Heart right ventricle (tissue), 16 donors: ENCODE measurements at regions of chr15 and their contacts with region 1.

Region 1: DNA sequence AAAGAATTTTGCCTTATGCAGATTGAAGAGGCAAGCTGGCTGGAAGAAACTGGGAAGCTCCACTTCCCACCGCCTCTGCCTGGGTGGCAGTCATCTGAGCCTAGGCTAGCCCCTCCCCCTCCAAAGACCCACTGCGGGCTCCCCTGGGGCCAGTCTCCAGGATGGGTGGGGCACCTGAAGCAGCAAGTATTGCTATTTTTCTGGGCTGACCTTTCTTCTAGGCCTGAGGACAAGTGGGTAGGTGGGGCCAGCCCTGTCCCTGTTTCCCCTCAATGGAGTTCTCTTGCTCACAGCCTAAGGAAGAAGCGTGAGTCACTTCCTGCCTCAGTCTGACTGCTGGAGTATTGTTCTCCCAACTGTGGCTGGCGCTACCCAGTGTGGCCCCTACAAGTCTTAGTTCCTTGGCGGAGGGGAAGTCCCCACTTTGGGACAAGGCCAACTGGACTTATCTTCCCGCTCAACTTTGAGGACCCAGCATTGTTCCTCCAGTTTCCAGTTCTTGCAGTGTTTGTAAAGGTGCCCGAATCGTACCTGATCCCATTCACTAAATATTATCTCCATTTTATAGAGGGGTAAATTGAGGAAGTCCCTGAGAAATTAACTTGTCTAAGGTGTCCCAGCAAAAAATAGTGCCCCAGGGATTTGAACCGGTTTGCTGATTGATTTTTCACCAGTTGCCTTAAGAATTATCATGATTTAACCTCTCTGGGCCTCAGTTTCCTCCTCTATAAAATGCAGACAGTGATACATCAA is 1.4 kb downstream of the FURIN start:
- DNase-seq: peak; percentile 81 to 89
- ATAC-seq: peak; percentile 82 to 93 (median 89)
- H3K4me3 ChIP-seq: peak overlapping the region in 8 of 10 donors; percentile 65 to 92 (median 74)
- H3K27ac ChIP-seq: peak overlapping the region; percentile 90 to 100 (median 98)
- H3K4me1 ChIP-seq: peaks cover 20 to 69% (median 52%) of the 10 kb centered on the region in 9 donors
- H3K27me3 ChIP-seq: no peaks in the 10 kb centered on the region
- CTCF ChIP-seq: no peak

Region 2: DNA sequence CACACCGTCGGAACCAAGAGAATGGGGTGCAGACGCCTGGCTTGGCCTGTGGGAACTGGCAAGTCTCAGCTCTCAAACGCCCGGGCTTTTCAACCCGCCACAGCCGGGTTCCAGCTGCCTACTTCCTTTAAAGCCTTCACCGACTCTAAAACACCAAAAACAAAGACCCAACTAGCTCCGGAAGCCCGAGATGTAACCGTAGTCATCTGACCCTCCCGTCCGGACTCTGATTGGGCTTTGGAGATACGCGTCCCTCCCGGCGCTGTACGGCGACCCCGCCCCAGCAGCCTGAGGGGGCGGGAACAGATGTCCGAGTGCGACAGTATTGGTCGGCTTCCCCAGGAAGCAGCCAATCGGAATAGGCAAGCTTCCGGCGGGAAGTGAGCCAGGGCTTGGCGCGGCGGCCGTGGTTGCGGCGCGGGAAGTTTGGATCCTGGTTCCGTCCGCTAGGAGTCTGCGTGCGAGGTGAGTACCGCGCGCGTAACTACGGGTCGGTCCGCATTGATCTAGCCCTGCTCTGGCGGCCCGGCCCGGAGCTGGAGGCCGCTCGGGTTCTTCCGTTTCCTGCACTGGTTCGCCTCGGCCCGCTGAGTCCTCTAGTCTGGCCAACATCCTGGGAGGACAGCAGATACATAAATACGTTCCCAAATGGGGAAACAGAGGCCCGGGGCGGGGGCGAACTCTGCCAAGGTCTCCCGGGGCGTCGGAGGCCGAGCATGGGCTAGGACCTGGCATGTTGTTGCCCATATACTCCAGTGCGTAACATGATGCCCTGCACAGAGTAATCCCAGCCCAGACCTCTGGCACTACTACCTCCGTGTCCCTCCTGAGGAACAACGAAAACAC is 152.6 kb before region 1 on chr15 and contains the start of gene BLM:
- intact Hi-C with region 1: loop called in 5 of 10 experiments (anchors 2 to 5 kb)
- DNase-seq: peak; percentile 95
- ATAC-seq: peak; percentile 100
- H3K4me3 ChIP-seq: peak within 1 kb of the TSS; percentile 35 to 76 (median 70)
- H3K27ac ChIP-seq: peak within 1 kb of the TSS; percentile 74 to 96 (median 88)
- H3K4me1 ChIP-seq: peaks cover 2 to 18% (median 14%) of the 10 kb centered on the region in 9 donors
- H3K27me3 ChIP-seq: no peaks in the 10 kb centered on the region
- CTCF ChIP-seq: peak in 8 of 9 donors; percentile 27 to 58 (median 48)
- total RNA-seq, gene BLM: 3.5 to 35.0 (median 7.9) TPM

Region 3: GRCh38 chr15:90762109-90762508 is 107.7 kb before region 1 on chr15:
- intact Hi-C with region 1: loop called in 1 of 10 experiments (anchors 10 kb)
- DNase-seq: peak; percentile 43 to 57
- ATAC-seq: peak; percentile 72 to 99 (median 93)
- H3K4me3 ChIP-seq: peak overlapping the region in 4 of 10 donors; percentile 3 to 22 (median 11)
- H3K27ac ChIP-seq: peak overlapping the region; percentile 68 to 83 (median 72)
- H3K4me1 ChIP-seq: peaks cover 0 to 55% (median 25%) of the 10 kb centered on the region in 9 donors
- H3K27me3 ChIP-seq: no peaks in the 10 kb centered on the region
- CTCF ChIP-seq: no peak

Region 4: GRCh38 chr15:90814191-90814821 is 55.5 kb before region 1 on chr15:
- intact Hi-C with region 1: loop called in 1 of 10 experiments (anchors 5 kb)
- DNase-seq: no peak
- ATAC-seq: no peak
- H3K4me3 ChIP-seq: no peak overlapping the region
- H3K27ac ChIP-seq: peak overlapping the region in 1 of 10 donors; percentile 77
- H3K4me1 ChIP-seq: peaks cover 0 to 47% (median 11%) of the 10 kb centered on the region in 9 donors
- H3K27me3 ChIP-seq: no peaks in the 10 kb centered on the region
- CTCF ChIP-seq: no peak

Region 5: DNA sequence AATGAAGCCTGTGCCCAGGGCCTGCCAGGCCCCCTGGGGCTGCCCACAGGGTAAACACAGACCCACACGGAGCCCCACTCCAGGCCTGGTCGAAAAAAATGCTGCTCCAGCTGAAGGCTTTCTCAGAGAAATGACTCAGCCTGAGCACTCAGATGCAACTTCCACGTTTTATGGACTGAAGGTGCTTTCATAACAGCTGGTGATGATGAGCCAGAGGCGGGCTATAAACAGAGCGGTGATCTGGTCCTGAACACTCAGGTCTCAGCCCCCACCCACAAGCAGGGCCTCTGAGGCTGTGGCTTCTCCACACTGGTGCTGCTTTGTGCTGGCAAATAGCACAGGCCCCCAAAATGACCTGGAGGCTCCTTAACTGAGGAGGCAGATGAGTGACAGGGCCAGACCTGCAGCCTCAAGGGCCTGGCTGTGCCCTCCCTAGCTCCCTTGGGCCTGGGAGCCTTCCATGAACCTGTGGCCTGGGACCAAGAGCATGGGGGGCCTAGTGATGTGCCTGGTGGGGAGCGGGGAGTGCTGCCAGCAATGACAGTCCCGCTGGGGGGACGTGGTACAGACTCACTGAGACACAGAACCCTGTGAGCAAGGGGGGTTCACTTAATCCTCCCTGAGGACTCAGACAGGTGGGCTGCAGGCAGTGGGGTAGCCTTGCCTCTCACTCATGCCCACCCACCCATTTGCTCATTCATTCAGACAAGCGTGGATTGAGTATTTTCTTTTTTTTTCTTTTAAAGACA is 24.4 kb before region 1 on chr15:
- intact Hi-C with region 1: no loop called
- DNase-seq: no peak
- ATAC-seq: peak in 3 of 8 donors; percentile 51 to 76 (median 55)
- H3K4me3 ChIP-seq: no peak overlapping the region
- H3K27ac ChIP-seq: peak overlapping the region in 1 of 10 donors; percentile 88
- H3K4me1 ChIP-seq: peaks cover 0 to 30% (median 0%) of the 10 kb centered on the region in 9 donors
- H3K27me3 ChIP-seq: no peaks in the 10 kb centered on the region
- CTCF ChIP-seq: no peak